Dendritic cell treated with granulocyte-macrophage colony-stimulating factor and Interleukin-4, amounts not matched to agents 40 ng/mL and 50 ng/mL, for 4 days (primary cell): ENCODE measurements at regions of chr5 and their contacts with region 1.

Region 1: GRCh38 chr5:75566710-75567309 is 44.4 kb upstream of the ANKDD1B start:
- H3K4me3 Mint-ChIP-seq: no peak overlapping the region
- H3K27ac Mint-ChIP-seq: no peak overlapping the region
- H3K4me1 Mint-ChIP-seq: peaks cover 39% of the 10 kb centered on the region
- H3K27me3 Mint-ChIP-seq: no peaks in the 10 kb centered on the region

Region 2: GRCh38 chr5:75412111-75412990 is 154.5 kb before region 1 on chr5:
- intact Hi-C with region 1: loop called (anchors 10 kb)
- H3K4me3 Mint-ChIP-seq: no peak overlapping the region
- H3K27ac Mint-ChIP-seq: no peak overlapping the region
- H3K4me1 Mint-ChIP-seq: peaks cover 5% of the 10 kb centered on the region
- H3K27me3 Mint-ChIP-seq: no peaks in the 10 kb centered on the region